ENCODE measurements at regions of chr9 and their contacts with region 1.

Region 1: GRCh38 chr9:385818-386398 is 171.2 kb downstream of the DOCK8 start:
- DNase-seq: no peak
- H3K4me3 ChIP-seq: no peak overlapping the region
- H3K27ac ChIP-seq: no peak overlapping the region
- H3K4me1 ChIP-seq: no peaks in the 10 kb centered on the region
- H3K27me3 ChIP-seq: no peaks in the 10 kb centered on the region
- CTCF ChIP-seq: peak; percentile 55 to 91 (median 89)

Region 2: DNA sequence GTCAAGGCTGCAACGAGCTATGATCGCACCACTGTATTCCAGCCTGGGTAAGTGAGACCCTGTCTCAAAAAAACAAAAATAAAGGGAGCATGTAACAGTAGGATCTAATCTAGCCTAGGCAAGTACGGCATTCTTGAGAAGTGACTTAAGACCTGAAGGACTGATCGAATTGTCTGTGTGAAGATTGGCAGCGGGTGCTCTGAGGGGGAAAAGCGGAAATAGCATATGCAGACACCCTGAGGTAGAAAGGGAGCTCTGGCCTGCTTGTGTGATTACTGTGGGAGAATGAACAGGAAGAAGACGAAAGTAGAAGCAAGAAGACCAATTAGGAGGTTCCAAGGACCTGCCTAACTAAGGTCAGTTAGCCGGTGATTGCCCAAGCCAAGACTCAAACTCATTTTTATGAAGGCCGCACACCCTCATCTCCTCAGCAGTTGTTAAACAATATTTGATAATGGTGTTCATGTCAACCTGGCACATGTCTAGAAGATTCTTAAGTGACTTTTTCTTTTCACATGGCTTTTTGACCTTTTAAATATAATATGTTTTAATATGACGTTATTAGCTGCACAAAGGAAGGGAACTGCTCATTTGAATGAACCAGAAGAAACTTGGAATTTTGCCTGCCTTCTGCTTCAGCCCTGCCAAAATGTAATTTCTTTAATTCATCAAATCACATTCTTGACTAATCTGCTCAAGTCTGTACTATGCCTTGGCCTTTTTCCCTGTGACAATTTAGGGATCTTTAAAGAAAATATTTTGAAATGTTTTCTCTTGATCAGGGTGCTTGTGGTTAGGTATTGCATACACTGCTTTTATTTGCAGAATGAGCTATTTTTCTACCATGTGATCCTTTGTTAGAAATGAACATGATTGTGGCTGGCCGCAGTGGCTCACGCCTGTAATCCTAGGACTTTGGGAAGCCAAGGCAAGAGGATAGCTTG is 166.3 kb after region 1 on chr9:
- intact Hi-C with region 1: loop called (anchors 5 kb)
- DNase-seq: no peak
- H3K4me3 ChIP-seq: no peak overlapping the region
- H3K27ac ChIP-seq: no peak overlapping the region
- H3K4me1 ChIP-seq: peaks cover 0 to 2% of the 10 kb centered on the region in 2 donors
- H3K27me3 ChIP-seq: no peaks in the 10 kb centered on the region
- CTCF ChIP-seq: no peak

Region 3: DNA sequence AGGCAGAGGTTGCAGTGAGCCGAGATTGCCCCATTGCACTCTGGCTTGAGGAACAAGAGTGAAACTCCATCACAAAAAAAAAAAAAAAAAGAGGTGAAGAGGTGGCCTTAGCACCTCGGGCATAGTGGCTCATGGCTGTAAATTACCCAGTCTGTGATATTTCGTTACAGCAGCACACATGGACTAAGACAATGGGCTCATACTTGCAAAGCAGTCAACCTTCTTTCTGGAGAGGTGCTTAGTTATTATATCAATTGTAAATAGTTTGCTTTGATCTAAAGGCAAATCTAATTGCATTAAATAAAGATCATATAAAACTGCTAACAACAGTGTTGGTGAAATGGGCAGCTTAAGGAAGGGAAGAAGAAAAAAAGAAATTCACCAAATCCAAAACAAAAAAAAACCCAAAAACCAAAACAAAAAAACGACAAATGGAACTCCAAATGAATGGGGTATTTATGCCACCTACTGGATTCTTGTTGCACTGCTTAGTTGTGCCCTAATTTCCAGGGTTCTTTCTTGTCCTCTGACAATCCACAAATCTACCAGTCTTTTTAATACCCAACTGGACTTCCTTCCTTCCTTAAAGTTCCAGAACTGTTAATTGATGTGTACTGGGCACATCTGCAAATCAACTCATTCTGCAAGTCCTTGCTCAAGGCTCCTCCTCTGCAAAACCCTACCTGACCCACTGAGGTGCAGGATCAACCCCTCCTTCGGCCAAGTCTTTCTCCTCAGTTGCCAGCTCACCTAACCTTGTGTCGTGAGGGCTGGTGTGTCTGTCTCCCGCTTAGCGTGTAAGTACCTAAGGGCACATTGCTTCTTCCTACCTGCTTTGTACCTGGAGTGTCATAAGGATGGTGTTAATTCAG is 420.6 kb after region 1 on chr9:
- intact Hi-C with region 1: loop called (anchors 2 kb)
- DNase-seq: no peak
- H3K4me3 ChIP-seq: no peak overlapping the region
- H3K27ac ChIP-seq: no peak overlapping the region
- H3K4me1 ChIP-seq: peaks cover 0 to under 1% of the 10 kb centered on the region in 2 donors
- H3K27me3 ChIP-seq: no peaks in the 10 kb centered on the region
- CTCF ChIP-seq: peak; percentile 31 to 77 (median 62)

Region 4: DNA sequence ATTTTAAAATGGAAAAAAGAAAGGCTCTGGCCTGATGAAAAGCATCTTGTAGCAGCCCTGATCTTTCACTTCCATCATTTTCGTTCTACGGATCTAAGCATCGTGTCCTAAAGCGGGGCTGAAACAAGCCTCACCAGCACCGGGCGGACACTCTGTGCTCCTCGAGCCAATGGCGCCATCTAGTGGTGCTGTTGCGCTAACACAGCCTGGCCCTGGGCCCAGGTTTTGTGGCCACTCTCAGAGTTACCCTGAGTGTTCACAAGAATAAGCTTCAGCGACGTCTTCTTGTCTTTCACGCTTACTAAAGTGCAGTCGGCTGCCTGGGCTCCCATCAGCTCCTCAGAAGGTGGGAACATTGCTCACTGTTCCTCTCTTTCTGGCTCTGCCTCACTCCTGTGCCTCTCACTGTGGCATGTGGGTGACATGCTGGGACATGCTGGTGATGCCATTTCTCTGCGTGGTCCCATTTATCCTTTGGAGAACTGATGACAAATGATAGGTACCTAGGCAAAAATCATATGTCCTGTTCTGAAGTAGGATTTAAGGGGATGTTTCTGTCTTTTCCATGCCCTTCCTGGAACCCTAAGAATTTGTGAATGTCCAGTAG is 623.3 kb after region 1 on chr9:
- intact Hi-C with region 1: loop called (anchors 2 kb)
- DNase-seq: peak; percentile 12 to 87
- H3K4me3 ChIP-seq: no peak overlapping the region
- H3K27ac ChIP-seq: no peak overlapping the region
- H3K4me1 ChIP-seq: no peaks in the 10 kb centered on the region
- H3K27me3 ChIP-seq: no peaks in the 10 kb centered on the region
- CTCF ChIP-seq: peak; percentile 79 to 95 (median 90)